ENCODE measurements at regions of chr1 and their contacts with region 1.

Region 1: GRCh38 chr1:156445789-156446263 is 54.7 kb downstream of the MEF2D start:
- DNase-seq: no peak
- ATAC-seq: peak; percentile 95
- H3K4me3 ChIP-seq: no peak overlapping the region
- H3K27ac ChIP-seq: no peak overlapping the region
- H3K4me1 ChIP-seq: no peaks in the 10 kb centered on the region
- H3K27me3 ChIP-seq: peaks cover 7 to 14% of the 10 kb centered on the region in 2 experiments
- CTCF ChIP-seq: peak; percentile 97 to 98 (median 98)
- EP300 ChIP-seq: no peak
- POLR2A ChIP-seq: no peak
- RAD21 ChIP-seq: peak; percentile 99

Region 2: GRCh38 chr1:156356875-156357534 is 88.8 kb before region 1 on chr1:
- CTCF ChIA-PET with region 1: interaction called, 25 read pairs
- POLR2A ChIA-PET with region 1: no interaction called
- RAD21 ChIA-PET with region 1: interaction called, 4 read pairs
- SMC1A ChIA-PET with region 1: interaction called, 8 read pairs
- in situ Hi-C with region 1: no loop called
- intact Hi-C with region 1: loop called (anchors 1 kb)
- DNase-seq: no peak
- ATAC-seq: peak; percentile 100
- H3K4me3 ChIP-seq: no peak overlapping the region
- H3K27ac ChIP-seq: no peak overlapping the region
- H3K4me1 ChIP-seq: 0 out of 2 replicates have a peak, but pooled peaks cover 2% of the 10 kb centered on the region
- H3K27me3 ChIP-seq: peaks cover 2% of the 10 kb centered on the region in 2 experiments; a peak in 2 of 4 replicates
- CTCF ChIP-seq: peak; percentile 89 to 98 (median 95); a peak in 5 of 6 replicates
- EP300 ChIP-seq: no peak
- POLR2A ChIP-seq: no peak
- RAD21 ChIP-seq: peak; percentile 53; the same call in 1 of the 2 replicates

Region 3: DNA sequence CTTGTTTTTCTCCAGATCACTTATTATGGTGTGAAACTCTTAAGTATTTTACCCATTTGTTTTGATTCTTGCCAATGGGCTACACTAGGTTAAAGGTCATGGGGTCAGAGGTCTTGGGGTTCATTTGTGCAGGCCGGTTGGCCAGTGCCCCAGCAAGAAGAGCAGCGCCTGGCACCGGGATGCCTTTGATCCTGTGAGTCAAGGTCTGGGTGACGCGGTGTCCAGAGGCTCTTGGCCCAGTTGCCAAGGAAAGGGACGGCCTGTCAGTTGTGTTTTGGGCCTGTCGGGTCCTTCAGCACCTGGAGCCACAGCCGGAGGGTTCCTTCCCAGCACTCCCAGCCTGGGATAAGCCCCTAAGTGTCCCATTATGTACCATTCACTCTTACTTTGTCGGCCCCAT is 51.7 kb before region 1 on chr1:
- CTCF ChIA-PET with region 1: interaction called, 14 read pairs
- POLR2A ChIA-PET with region 1: no interaction called
- RAD21 ChIA-PET with region 1: interaction called, 6 read pairs
- SMC1A ChIA-PET with region 1: interaction called, 14 read pairs
- in situ Hi-C with region 1: no loop called
- intact Hi-C with region 1: no loop called
- DNase-seq: no peak
- ATAC-seq: no peak
- H3K4me3 ChIP-seq: no peak overlapping the region
- H3K27ac ChIP-seq: no peak overlapping the region
- H3K4me1 ChIP-seq: no peaks in the 10 kb centered on the region; the same call in 1 of the 2 replicates
- H3K27me3 ChIP-seq: peaks cover 0 to 2% of the 10 kb centered on the region in 2 experiments; a peak in 3 of 4 replicates
- CTCF ChIP-seq: no peak
- EP300 ChIP-seq: no peak
- POLR2A ChIP-seq: no peak
- RAD21 ChIP-seq: no peak

Region 4: DNA sequence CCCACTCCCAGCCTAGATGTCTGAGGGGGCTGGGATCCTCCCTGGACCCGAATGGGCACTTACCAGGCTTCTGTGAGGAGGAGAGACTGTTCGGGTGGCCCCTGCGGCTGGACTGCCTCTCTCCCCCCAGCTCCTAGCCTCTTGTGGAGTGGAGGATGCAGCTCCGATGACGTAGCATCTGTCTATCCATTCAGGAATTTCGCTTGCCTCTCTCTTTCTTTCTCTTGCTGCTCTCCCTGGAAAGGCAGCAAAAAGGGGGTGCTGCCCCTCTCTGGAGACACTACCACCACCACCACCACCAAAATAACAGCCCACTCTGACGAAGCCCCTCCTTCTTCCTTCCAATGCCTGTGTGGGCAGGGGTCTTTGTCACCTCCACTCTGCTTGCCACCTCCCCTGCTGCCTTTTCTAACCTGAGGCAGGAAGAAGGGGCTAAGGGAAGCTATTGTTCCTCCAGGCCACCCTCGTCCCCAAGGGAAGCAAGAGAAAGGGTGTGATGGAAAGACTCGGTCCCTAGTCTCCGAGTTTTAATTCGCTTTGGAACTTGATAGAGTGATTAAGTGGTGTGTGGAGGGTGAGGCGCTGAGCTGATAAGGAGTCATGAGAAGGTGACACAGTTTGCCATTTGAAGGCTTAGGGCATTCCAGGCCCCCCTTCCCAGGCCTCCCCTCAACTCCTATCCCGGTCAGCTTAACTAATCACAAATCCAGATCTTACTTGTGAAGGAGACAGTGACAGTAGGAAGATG is 16.3 kb before region 1 on chr1:
- CTCF ChIA-PET with region 1: interaction called, 8 read pairs
- POLR2A ChIA-PET with region 1: no interaction called
- RAD21 ChIA-PET with region 1: interaction called, 9 read pairs
- SMC1A ChIA-PET with region 1: interaction called, 13 read pairs
- in situ Hi-C with region 1: no loop called
- intact Hi-C with region 1: no loop called
- DNase-seq: no peak
- ATAC-seq: no peak
- H3K4me3 ChIP-seq: no peak overlapping the region
- H3K27ac ChIP-seq: no peak overlapping the region
- H3K4me1 ChIP-seq: no peaks in the 10 kb centered on the region; the same call in 1 of the 2 replicates
- H3K27me3 ChIP-seq: peaks cover 16 to 26% of the 10 kb centered on the region in 2 experiments
- CTCF ChIP-seq: no peak
- EP300 ChIP-seq: no peak
- POLR2A ChIP-seq: no peak
- RAD21 ChIP-seq: no peak

Region 5: GRCh38 chr1:156524481-156524869 is 78.6 kb after region 1 on chr1:
- CTCF ChIA-PET with region 1: interaction called, 15 read pairs
- POLR2A ChIA-PET with region 1: interaction called, 3 read pairs
- RAD21 ChIA-PET with region 1: no interaction called
- SMC1A ChIA-PET with region 1: interaction called, 3 read pairs
- in situ Hi-C with region 1: no loop called
- intact Hi-C with region 1: no loop called
- DNase-seq: no peak
- ATAC-seq: peak; percentile 69
- H3K4me3 ChIP-seq: peak overlapping the region; percentile 54; the same call in 1 of the 2 replicates
- H3K27ac ChIP-seq: peak overlapping the region; percentile 76
- H3K4me1 ChIP-seq: peaks cover 24% of the 10 kb centered on the region
- H3K27me3 ChIP-seq: no peaks in the 10 kb centered on the region
- CTCF ChIP-seq: no peak
- EP300 ChIP-seq: no peak
- POLR2A ChIP-seq: no peak
- RAD21 ChIP-seq: no peak

Region 6: DNA sequence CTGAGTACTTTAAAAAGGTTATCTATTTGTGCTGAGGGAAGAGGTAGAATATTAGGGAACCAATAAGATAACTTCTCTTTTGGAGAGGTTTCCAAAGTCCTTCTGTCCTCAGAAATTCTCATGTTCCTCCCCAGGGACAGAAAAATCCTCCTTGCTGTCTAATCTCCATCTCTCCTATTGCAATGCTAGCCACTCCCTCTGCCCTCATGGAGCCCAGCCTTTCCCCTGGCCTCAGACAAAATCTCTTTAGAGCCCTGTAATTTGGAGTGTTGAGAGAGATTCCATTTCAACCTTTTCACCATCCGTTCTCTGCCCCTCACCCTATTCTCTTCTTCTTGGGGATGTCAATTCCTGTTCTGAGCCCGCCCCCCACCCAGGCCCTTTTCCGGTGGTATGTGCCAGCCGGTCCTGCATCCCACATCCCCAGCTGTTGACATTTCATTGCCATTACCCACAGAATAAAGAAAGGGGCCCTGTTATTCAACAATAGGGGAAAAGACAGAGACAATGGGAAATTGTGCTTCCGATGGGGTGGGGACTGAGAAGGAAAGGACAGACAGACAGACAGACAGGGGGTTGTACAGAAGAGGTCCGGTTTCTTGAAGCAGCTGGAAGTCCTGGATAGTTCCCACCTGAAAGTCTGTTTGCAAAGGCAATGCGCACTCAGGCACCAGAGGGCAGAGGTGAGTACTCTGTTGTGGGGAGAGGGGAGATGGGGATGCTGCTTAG is 173.2 kb after region 1 on chr1 and contains the start of gene HAPLN2:
- CTCF ChIA-PET with region 1: interaction called, 13 read pairs
- POLR2A ChIA-PET with region 1: no interaction called
- RAD21 ChIA-PET with region 1: interaction called, 5 read pairs
- SMC1A ChIA-PET with region 1: interaction called, 3 read pairs
- in situ Hi-C with region 1: no loop called
- intact Hi-C with region 1: no loop called
- DNase-seq: no peak
- ATAC-seq: peak; percentile 68
- H3K4me3 ChIP-seq: no peak within 1 kb of the TSS
- H3K27ac ChIP-seq: no peak within 1 kb of the TSS
- H3K4me1 ChIP-seq: no peaks in the 10 kb centered on the region; the same call in 1 of the 2 replicates
- H3K27me3 ChIP-seq: peaks cover 10% of the 10 kb centered on the region in 2 experiments
- CTCF ChIP-seq: peak; percentile 48 to 60 (median 53)
- EP300 ChIP-seq: no peak
- POLR2A ChIP-seq: no peak
- RAD21 ChIP-seq: no peak
- polyA plus RNA-seq, gene HAPLN2: not detected